ENCODE measurements at regions of chr10 and their contacts with region 1.

Region 1: GRCh38 chr10:126569513-126570244 is 100.8 kb downstream of the C10orf90 start:
- DNase-seq: no peak
- H3K4me3 ChIP-seq: peak overlapping the region in 42 of 59 donors; percentile 1 to 46 (median 23)
- H3K27ac ChIP-seq: peak overlapping the region in 57 of 59 donors; percentile 8 to 90 (median 71)
- H3K27me3 ChIP-seq: no peaks in the 10 kb centered on the region
- CTCF ChIP-seq: no peak

Region 2: GRCh38 chr10:126468876-126469643 is 100.6 kb before region 1 on chr10:
- intact Hi-C with region 1: loop called in 1 of 2 experiments (anchors 5 kb)
- DNase-seq: no peak
- H3K4me3 ChIP-seq: no peak overlapping the region
- H3K27ac ChIP-seq: peak overlapping the region in 10 of 59 donors; percentile 8 to 44 (median 24)
- H3K27me3 ChIP-seq: peaks cover 0 to 5% (median 0%) of the 10 kb centered on the region in 45 donors
- CTCF ChIP-seq: no peak

Region 3: DNA sequence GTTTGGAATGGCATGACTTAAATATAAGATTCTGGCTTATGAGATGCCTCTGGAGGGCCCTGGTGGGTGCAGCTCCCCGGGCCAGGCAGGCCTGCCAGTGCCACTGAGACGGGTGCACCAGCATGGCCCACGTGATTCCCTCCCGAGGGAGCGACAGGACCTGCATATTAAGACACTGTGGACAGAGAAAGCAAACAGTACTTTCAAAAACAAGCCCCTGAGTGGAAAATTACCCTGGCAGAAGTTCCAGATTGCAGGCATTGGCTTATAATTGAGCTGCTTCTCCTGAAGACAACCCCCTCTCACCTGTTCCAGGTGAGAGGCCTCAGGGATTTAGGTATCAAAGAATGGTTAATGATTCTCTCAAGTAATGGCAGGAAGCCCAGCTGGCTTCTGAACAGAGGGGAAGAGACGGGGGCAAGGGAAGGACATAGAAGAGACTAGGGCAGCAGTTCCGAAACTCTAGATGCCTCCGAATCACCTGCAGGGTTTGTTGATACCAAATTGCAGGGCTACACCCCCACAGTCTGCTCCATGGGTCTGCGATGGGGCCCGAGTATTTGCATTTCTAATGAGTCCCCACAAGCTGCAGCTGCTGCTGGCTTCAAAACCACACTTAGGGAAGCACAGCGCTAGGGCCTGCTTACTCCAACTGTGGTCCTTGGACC is 269.5 kb after region 1 on chr10:
- intact Hi-C with region 1: loop called in 1 of 2 experiments (anchors 10 kb)
- DNase-seq: peak; percentile 41 to 97 (median 90)
- H3K4me3 ChIP-seq: peak overlapping the region in 11 of 59 donors; percentile 1 to 32 (median 8)
- H3K27ac ChIP-seq: peak overlapping the region in 58 of 59 donors; percentile 42 to 96 (median 80)
- H3K27me3 ChIP-seq: no peaks in the 10 kb centered on the region
- CTCF ChIP-seq: peak in 34 of 56 donors; percentile 8 to 53 (median 27)